K562 (cell line): ENCODE measurements at regions of chr7 and their contacts with region 1.

Region 1: DNA sequence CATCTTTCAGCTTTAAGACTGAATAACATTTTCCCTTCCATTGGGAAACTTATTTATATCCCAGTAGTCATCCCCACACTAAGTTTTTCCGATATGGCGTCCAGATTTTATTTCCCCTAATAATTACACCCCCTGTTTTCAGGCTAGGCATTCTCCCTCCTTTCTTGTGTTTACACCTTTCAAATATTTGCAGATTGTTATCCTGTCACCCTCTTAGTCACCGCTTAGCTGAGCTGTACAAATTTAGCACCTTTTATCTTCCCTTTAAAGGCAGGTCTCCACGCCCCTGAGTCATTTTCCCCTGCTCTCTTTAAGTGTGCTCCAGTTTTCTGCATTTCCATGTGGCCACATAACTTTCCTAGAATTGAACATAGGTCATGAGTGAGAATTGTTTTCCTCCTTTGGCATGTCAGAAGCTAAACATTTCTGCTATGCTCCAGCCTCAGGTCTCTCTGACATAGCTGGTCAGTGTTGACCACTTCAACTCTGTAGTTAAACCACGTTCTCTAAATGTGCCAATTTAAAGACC is 47.4 kb downstream of the LRRC4 start:
- DNase-seq: peak; percentile 51 to 85 (median 66)
- ATAC-seq: peak; percentile 79
- H3K4me3 ChIP-seq: no peak overlapping the region
- H3K27ac ChIP-seq: peak overlapping the region; percentile 55
- H3K4me1 ChIP-seq: peaks cover 12 to 44% of the 10 kb centered on the region in 2 experiments
- H3K27me3 ChIP-seq: no peaks in the 10 kb centered on the region
- CTCF ChIP-seq: no peak
- EP300 ChIP-seq: 0 out of 2 replicates have a peak, but pooled peaks have one; percentile 33
- POLR2A ChIP-seq: no peak
- RAD21 ChIP-seq: no peak

Region 2: DNA sequence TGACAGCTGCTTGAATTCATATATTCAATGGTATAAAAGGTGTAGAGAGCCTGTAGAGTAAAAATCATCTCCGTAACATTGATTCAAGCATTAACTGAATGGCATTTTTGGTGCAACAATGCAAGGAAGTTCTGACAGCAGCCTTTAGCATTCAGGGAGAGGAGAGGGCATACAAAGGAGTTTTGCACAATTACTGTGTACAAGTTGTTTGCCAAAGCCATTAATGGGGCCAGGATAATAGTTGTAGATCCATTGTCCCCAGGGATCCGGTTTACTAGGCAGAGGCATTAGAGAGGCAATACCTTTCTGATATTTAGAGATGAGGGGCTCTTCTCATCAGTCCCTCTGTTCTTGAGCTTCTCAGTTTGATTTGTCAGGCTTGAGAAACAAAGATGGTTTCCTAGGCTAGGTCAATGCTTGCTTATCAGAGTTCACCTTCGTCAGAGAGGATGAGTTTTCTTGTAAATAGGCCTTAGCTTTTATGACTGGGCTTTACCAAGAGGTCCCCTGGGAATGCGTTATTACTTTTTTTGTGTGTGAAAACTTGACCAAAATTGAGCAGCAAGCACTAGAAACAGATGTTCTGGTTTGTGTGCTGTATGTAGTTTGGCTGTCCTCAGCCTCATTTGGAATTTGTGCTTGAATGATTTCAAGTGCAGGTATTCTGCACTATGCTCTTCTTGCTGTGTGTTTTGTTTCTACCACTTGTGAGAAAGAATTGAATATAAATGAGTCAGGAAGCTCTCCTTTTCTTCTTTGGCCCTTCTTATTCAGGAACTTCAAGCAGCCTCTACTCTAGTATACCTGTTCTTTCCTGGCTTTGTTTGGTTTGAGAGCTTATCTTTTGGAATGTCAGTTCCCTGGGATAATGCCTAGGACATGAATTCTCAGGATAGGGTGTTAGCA is 299.8 kb before region 1 on chr7:
- CTCF ChIA-PET with region 1: no interaction called
- POLR2A ChIA-PET with region 1: no interaction called
- in situ Hi-C with region 1: no loop called
- intact Hi-C with region 1: no loop called
- DNase-seq: no peak
- ATAC-seq: peak; percentile 30; the same call in 1 of the 3 replicates
- H3K4me3 ChIP-seq: no peak overlapping the region
- H3K27ac ChIP-seq: no peak overlapping the region
- H3K4me1 ChIP-seq: no peaks in the 10 kb centered on the region
- H3K27me3 ChIP-seq: no peaks in the 10 kb centered on the region
- CTCF ChIP-seq: no peak
- EP300 ChIP-seq: no peak
- POLR2A ChIP-seq: no peak
- RAD21 ChIP-seq: no peak

Region 3: GRCh38 chr7:127892488-127893314 is 91.2 kb before region 1 on chr7:
- CTCF ChIA-PET with region 1: no interaction called
- POLR2A ChIA-PET with region 1: interaction called, 3 read pairs
- in situ Hi-C with region 1: no loop called
- intact Hi-C with region 1: loop called (anchors 5 kb)
- DNase-seq: peak; percentile 73 to 93 (median 83)
- ATAC-seq: peak; percentile 74
- H3K4me3 ChIP-seq: no peak overlapping the region
- H3K27ac ChIP-seq: peak overlapping the region; percentile 47
- H3K4me1 ChIP-seq: peaks cover 44 to 75% of the 10 kb centered on the region in 2 experiments
- H3K27me3 ChIP-seq: no peaks in the 10 kb centered on the region
- CTCF ChIP-seq: no peak; a peak in 1 of 6 replicates
- EP300 ChIP-seq: peak; percentile 96
- POLR2A ChIP-seq: no peak
- RAD21 ChIP-seq: 0 out of 4 replicates have a peak, but pooled peaks have one; percentile 8 to 23

Region 4: DNA sequence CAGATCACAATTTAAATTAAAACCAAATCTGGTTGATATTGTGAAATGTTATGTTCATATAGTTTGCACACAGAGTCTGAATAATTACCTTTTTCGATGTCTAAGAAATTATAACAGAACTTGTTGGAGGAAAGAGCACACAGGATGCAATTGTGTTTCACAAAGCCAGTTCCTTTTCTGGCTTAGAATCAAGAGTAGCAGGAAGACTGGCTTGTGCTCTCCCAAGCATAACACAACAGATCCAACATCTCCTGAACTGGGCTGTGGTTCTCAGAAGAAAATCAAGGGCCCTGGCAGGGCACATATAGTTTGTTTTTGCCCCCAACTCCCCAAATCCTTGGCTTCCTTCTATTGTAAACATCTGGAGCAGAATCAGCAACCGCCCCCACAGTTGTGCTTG is 15.3 kb before region 1 on chr7:
- CTCF ChIA-PET with region 1: no interaction called
- POLR2A ChIA-PET with region 1: interaction called, 12 read pairs
- in situ Hi-C with region 1: no loop called
- intact Hi-C with region 1: no loop called
- DNase-seq: no peak
- ATAC-seq: no peak
- H3K4me3 ChIP-seq: no peak overlapping the region
- H3K27ac ChIP-seq: no peak overlapping the region
- H3K4me1 ChIP-seq: no peaks in the 10 kb centered on the region
- H3K27me3 ChIP-seq: no peaks in the 10 kb centered on the region
- CTCF ChIP-seq: no peak
- EP300 ChIP-seq: no peak
- POLR2A ChIP-seq: no peak
- RAD21 ChIP-seq: no peak

Region 5: DNA sequence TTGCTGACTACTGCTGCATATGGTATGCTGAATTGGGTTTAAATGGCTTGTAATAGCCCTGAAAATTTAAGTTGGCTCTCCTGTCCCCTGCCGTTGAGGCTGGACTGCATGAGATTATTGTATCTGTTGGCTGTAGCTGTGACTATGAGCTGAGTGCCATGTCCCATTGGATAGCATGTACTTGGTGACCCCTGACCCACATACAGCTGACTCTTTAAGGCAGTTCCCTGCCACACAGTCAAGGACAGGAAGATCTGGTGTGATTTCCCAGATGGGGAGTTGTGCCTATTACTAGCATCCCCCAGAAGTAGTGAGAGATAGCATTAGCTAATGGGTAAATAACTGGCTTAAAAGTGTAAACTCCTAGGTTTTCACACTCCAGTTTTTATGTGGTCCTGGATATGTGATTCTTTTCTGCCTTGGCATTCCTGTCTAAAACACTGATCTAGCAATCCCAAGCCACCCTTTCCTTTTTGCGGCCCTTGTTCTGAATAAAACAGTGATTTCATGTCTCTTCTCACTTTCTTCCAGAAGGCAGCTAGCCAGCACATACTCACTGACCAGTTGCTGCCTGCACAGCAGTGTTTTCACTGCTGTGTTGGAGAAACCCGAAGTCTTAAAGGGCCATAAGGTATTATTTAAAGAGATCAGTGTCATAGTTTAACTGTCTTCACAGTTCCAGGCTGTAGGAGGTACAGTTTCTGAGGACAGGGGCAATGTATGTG is 11.4 kb after region 1 on chr7:
- CTCF ChIA-PET with region 1: no interaction called
- POLR2A ChIA-PET with region 1: interaction called, 20 read pairs
- in situ Hi-C with region 1: no loop called
- intact Hi-C with region 1: no loop called
- DNase-seq: peak in 2 of 4 experiments; percentile 40 to 52
- ATAC-seq: peak; percentile 17
- H3K4me3 ChIP-seq: no peak overlapping the region
- H3K27ac ChIP-seq: no peak overlapping the region
- H3K4me1 ChIP-seq: peaks cover 37 to 52% of the 10 kb centered on the region in 2 experiments; a peak in 4 of 5 replicates
- H3K27me3 ChIP-seq: no peaks in the 10 kb centered on the region
- CTCF ChIP-seq: no peak
- EP300 ChIP-seq: no peak
- POLR2A ChIP-seq: no peak
- RAD21 ChIP-seq: no peak

Region 6: DNA sequence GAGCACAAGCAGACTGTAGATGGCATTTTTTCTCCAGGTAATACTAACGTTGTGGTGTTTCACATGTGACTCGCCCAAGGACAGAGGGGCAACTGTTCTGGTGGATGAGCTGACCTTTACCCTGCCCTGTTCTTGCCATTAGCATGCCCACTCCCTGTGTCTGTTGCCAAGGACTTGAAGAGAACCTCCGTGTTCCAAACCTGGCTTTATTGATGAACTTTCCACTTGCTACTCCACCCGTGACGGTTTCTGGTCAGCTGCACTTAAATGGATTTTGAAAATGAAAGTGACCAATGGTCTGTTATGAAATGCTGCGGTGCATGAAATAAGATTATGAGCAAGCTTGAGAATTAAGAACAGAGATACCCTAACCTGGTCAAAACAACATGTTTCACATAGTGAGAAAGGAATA is 17.0 kb after region 1 on chr7:
- CTCF ChIA-PET with region 1: no interaction called
- POLR2A ChIA-PET with region 1: interaction called, 20 read pairs
- in situ Hi-C with region 1: no loop called
- intact Hi-C with region 1: no loop called
- DNase-seq: no peak
- ATAC-seq: no peak
- H3K4me3 ChIP-seq: no peak overlapping the region
- H3K27ac ChIP-seq: no peak overlapping the region
- H3K4me1 ChIP-seq: peaks cover 30 to 51% of the 10 kb centered on the region in 2 experiments; a peak in 4 of 5 replicates
- H3K27me3 ChIP-seq: no peaks in the 10 kb centered on the region
- CTCF ChIP-seq: no peak
- EP300 ChIP-seq: no peak
- POLR2A ChIP-seq: no peak
- RAD21 ChIP-seq: no peak